AG04449 (cell line): ENCODE measurements at regions of chr6 and their contacts with region 1.

Region 1: GRCh38 chr6:136037876-136038460 is 186.5 kb downstream of the PDE7B start:
- DNase-seq: no peak
- H3K4me3 ChIP-seq: peak overlapping the region; percentile 67
- CTCF ChIP-seq: peak; percentile 64

Region 2: GRCh38 chr6:136051140-136051775 is 13.3 kb after region 1 on chr6:
- CTCF ChIA-PET with region 1: interaction called, 11 read pairs
- POLR2A ChIA-PET with region 1: no interaction called
- DNase-seq: no peak
- H3K4me3 ChIP-seq: no peak overlapping the region
- CTCF ChIP-seq: no peak

Region 3: DNA sequence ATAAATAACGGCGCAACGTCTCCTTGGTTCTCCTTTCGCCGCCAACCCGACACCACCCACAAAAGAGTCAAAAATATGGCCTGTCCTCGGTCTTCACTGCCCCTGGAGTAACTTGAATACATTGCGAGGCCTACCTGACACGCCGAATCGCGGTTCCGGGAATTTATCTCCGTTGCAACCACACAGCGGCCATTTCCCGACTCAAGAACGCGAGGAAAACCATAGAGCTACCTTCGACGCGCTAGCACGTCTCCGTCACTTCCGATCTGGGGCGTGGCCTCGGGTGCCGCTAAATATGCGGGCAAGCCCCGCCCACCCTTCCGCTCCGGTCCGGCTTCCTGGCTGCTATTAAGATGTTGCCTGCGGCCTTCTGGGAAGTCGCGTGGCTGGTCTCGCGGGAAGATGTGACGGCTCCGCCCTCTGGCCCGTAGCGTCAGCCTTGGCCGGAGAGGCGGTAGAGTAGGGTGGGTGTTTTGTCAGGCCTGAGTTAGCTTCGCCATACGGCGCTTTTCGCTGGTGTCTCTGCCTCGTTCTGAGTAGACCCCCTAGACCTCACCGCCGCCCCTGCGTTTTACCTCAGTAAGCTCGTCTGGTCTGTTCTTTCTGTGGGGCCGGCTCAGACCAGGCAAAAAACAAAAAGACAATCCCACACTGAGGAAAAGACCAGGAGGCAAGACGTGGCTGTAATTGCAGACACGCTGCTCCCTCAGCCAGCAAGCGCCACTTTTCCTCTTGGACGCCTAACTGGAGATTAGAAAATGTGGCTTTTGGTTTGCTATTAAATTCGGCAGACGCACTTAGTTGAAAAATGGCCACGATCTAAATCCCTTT is 251.8 kb after region 1 on chr6 and contains the start of gene BCLAF1:
- CTCF ChIA-PET with region 1: no interaction called
- POLR2A ChIA-PET with region 1: no interaction called
- DNase-seq: peak; percentile 96
- H3K4me3 ChIP-seq: peak within 1 kb of the TSS; percentile 75
- CTCF ChIP-seq: no peak